A673 (cell line): ENCODE measurements at regions of chr13 and their contacts with region 1.

Region 1: GRCh38 chr13:39602614-39603366 is at the start of gene LHFPL6:
- DNase-seq: peak; percentile 92
- H3K4me3 ChIP-seq: peak within 1 kb of the TSS; percentile 96
- H3K27ac ChIP-seq: peak within 1 kb of the TSS; percentile 90
- H3K4me1 ChIP-seq: peaks cover 20% of the 10 kb centered on the region
- H3K27me3 ChIP-seq: no peaks in the 10 kb centered on the region
- CTCF ChIP-seq: peak; percentile 63
- total RNA-seq, gene LHFPL6: 63.9 and 72.1 TPM in 2 replicates

Region 2: GRCh38 chr13:39370554-39370953 is 232.2 kb before region 1 on chr13:
- CTCF ChIA-PET with region 1: no interaction called
- POLR2A ChIA-PET with region 1: no interaction called
- intact Hi-C with region 1: loop called (anchors 1 kb)
- DNase-seq: peak; percentile 91
- H3K4me3 ChIP-seq: no peak overlapping the region
- H3K27ac ChIP-seq: peak overlapping the region; percentile 92
- H3K4me1 ChIP-seq: peaks cover 89% of the 10 kb centered on the region
- H3K27me3 ChIP-seq: no peaks in the 10 kb centered on the region
- CTCF ChIP-seq: no peak

Region 3: GRCh38 chr13:39494006-39494405 is 108.8 kb before region 1 on chr13:
- CTCF ChIA-PET with region 1: no interaction called
- POLR2A ChIA-PET with region 1: no interaction called
- intact Hi-C with region 1: loop called (anchors 5 kb)
- DNase-seq: no peak
- H3K4me3 ChIP-seq: no peak overlapping the region
- H3K27ac ChIP-seq: no peak overlapping the region
- H3K4me1 ChIP-seq: peaks cover 59% of the 10 kb centered on the region
- H3K27me3 ChIP-seq: no peaks in the 10 kb centered on the region
- CTCF ChIP-seq: no peak

Region 4: DNA sequence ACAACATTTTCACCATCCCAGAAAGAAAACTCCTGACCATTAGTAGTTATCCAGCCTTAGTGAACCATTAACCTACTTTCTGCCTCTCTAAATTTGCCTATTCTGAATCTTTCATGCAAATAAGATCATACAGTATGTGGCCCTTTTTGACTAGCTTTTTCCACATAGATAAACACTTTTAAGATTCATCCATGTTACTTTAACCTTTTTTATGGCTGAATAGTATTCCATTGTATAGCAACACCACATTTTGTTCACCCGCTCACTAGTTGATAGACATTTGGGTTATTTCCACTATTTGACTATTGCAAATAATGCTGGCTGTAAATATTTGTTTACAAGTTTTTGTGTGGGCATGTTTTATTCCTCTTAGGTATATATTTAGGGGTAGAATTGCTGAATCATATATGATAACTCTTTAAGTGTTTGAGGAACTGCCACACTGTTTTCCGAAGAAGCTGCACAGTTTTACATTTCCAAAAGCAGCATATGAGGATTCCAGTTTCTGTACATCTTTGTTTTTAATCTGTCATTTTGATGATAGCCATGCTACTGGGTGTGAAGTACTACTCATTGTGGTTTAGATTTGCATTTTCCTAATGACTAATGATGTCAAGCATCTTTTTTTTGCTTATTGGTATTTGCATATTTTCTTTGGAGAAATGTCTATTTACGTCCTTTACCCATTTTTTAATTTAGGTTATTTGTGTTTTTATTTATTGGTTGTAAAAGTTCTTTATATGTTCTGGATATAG is 69.8 kb after region 1 on chr13:
- CTCF ChIA-PET with region 1: no interaction called
- POLR2A ChIA-PET with region 1: no interaction called
- intact Hi-C with region 1: no loop called
- DNase-seq: no peak
- H3K4me3 ChIP-seq: no peak overlapping the region
- H3K27ac ChIP-seq: no peak overlapping the region
- H3K4me1 ChIP-seq: peaks cover 27% of the 10 kb centered on the region
- H3K27me3 ChIP-seq: no peaks in the 10 kb centered on the region
- CTCF ChIP-seq: no peak